Calu3 (cell line): ENCODE measurements at regions of chr11 and their contacts with region 1.

Region 1: DNA sequence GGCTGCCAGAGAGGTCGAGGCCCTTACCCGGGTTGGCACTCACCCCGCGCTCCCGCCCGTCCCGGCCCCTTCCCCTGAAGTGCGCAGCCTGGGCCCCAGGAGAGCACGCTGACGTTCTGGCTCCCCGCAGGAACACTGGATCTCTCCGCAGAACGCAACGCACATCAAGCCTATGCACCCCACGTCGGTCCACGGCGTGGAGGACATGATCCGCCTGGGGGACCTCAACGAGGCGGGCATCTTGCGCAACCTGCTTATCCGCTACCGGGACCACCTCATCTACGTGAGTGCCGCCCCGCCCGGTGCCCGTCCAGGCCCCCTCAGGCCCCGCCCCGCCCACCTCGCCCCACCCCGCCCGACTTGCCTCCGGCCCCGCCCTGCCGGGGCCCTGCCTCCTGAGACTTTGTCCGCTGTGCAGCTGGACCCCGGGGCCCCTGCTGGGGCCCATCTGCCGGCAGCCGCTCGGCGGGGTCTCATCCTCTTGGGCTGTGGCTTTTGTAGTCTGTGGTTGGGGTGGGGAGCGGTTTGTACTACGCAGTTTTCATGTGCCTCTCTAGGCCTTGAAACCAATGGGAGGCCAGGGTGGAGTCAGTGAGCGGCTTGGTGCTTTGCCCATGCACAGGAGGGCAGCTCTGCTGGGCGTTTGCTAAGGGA is 19.7 kb downstream of the MYO7A start:
- DNase-seq: no peak
- H3K4me3 Mint-ChIP-seq: peak overlapping the region; percentile 54
- H3K27ac Mint-ChIP-seq: no peak overlapping the region
- H3K4me1 Mint-ChIP-seq: peaks cover 6% of the 10 kb centered on the region
- H3K27me3 Mint-ChIP-seq: peaks cover 56% of the 10 kb centered on the region
- CTCF ChIP-seq: no peak

Region 2: DNA sequence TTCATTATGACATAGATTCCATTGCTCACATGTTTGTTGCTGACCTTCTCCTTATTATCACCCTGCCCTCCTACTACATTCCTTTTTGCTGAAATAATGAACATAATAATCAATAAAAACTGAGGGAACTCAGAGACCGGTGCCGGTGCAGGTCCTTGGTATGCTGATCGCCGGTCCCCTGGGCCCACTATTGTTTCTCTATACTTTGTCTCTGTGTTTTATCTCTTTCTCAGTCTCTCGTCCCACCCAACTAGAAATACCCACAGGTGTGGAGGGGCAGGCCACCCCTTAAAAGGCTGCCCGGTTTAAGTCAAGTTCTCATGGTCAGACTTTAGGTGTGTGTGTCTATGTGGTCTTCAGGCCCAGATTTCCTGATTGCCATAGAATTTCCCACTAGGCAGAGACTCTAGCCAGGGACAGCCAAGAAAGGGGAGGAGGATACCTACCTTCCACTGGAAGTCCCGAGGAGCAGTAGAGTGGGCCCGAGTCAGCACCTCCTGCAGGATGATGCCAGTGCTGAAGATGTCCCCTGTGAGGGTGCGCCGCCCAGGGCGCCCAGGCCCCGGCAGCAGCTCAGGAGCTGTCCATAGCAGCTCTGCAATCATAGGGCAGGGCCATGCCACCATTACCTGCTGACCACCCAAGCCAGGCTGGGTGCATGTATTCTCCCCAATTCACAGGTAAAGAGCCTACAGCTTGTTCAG is 435.8 kb before region 1 on chr11:
- CTCF ChIA-PET with region 1: interaction called, 10 read pairs
- intact Hi-C with region 1: no loop called
- DNase-seq: no peak
- H3K4me3 Mint-ChIP-seq: no peak overlapping the region
- H3K27ac Mint-ChIP-seq: no peak overlapping the region
- H3K4me1 Mint-ChIP-seq: peaks cover 8% of the 10 kb centered on the region
- H3K27me3 Mint-ChIP-seq: peaks cover 23% of the 10 kb centered on the region
- CTCF ChIP-seq: no peak